ENCODE measurements at regions of chr7 and their contacts with region 1.

Region 1: DNA sequence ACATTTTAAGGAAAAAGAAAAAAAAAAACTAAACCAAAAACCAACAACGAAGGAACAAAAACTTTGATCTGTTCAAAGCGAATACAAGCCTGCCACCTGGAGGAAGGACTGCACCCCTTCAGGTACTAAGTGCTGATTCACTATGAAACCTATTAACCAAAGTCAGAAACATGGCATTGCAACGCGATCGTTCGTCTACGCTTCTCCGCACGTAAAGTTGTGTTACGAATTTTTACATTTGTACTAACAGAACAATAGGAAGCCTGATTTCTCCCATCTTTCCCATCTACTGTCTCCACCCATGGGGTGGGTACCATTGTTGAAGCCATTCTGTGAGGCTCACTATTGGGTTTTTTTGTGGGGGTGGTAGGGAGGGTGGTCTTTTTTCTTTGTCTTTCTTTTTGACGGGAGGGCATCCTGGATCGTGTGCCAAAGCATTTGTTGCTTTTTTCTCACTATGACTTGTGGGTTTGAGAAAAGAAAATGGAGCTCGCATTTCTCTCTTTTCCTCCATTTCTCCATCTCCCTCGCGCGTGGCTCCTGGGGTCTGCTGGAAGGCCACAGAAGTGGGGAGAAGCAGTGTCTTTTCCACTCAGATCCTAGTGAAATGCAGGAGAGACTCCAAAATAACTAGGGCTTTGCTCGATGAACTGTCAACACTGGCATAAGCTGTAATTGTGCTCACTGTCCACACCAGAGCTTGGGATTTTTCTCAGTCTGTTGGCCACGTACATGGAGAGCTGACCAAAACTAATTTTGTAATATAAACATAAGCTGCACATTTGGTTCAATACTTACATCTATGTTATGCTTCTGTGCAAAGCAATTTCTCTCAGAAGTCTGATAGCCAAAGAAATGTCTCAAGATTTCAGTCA is 100.9 kb upstream of the YAE1 start:
- DNase-seq: peak; percentile 63
- ATAC-seq: peak; percentile 86
- H3K4me3 ChIP-seq: no peak overlapping the region
- H3K27ac ChIP-seq: no peak overlapping the region
- H3K4me1 ChIP-seq: no peaks in the 10 kb centered on the region
- H3K27me3 ChIP-seq: peaks cover 4% of the 10 kb centered on the region
- CTCF ChIP-seq: peak; percentile 72
- POLR2A ChIP-seq: no peak
- RAD21 ChIP-seq: peak; percentile 76

Region 2: GRCh38 chr7:38398725-38399321 is 1066.5 kb before region 1 on chr7:
- CTCF ChIA-PET with region 1: no interaction called
- POLR2A ChIA-PET with region 1: no interaction called
- dilution Hi-C with region 1: no loop called
- in situ Hi-C with region 1: no loop called
- intact Hi-C with region 1: loop called (anchors 2 kb)
- DNase-seq: peak; percentile 48
- ATAC-seq: peak; percentile 94
- H3K4me3 ChIP-seq: no peak overlapping the region
- H3K27ac ChIP-seq: no peak overlapping the region
- H3K4me1 ChIP-seq: no peaks in the 10 kb centered on the region
- H3K27me3 ChIP-seq: no peaks in the 10 kb centered on the region
- CTCF ChIP-seq: peak; percentile 90
- POLR2A ChIP-seq: no peak
- RAD21 ChIP-seq: peak; percentile 73

Region 3: DNA sequence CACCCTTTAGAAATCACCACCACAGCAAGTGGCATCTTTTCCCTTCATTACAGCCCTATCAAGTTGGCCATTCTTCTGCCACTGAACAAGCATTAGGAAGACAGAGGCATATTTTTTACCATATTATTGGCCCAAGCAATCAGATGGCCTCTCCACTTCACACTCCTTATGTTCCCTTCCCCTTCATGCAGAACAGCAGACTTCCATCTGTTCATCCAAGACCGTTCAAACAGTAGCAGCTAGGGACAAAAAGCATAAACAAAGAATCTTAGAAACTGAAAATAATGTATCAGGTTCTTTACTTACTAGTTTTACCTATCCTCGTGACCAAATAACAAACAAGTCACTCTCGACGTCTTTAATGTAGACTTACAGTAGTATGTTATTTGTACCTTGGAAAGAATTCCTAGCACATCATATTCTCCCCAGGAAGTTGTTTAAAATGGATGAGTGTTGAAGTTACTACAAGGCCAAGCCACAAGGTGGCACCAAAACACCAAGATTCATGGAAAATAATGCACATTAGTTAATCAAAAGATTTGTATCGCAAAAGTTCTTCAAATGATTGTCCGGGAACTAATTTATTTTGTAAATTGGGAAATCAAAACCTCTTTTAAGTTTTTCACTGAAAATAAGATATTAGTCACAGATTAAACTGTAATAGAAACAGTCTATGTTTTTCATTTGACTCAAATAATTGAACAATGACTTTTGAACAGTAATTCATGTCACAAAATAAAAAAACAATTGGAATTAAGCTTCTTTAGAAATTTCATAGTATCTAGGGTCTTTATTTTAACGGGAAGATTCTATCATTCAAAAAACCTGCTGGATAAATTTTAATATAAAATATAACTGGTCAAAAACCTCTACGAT is 668.4 kb before region 1 on chr7:
- CTCF ChIA-PET with region 1: no interaction called
- POLR2A ChIA-PET with region 1: no interaction called
- dilution Hi-C with region 1: no loop called
- in situ Hi-C with region 1: loop called (anchors 25 kb)
- intact Hi-C with region 1: loop called (anchors 1 kb)
- DNase-seq: peak; percentile 67
- ATAC-seq: peak; percentile 85
- H3K4me3 ChIP-seq: no peak overlapping the region
- H3K27ac ChIP-seq: no peak overlapping the region
- H3K4me1 ChIP-seq: no peaks in the 10 kb centered on the region; the same call in 1 of the 2 replicates
- H3K27me3 ChIP-seq: no peaks in the 10 kb centered on the region
- CTCF ChIP-seq: peak; percentile 80
- POLR2A ChIP-seq: 0 out of 2 replicates have a peak, but pooled peaks have one; percentile 20
- RAD21 ChIP-seq: peak; percentile 88

Region 4: DNA sequence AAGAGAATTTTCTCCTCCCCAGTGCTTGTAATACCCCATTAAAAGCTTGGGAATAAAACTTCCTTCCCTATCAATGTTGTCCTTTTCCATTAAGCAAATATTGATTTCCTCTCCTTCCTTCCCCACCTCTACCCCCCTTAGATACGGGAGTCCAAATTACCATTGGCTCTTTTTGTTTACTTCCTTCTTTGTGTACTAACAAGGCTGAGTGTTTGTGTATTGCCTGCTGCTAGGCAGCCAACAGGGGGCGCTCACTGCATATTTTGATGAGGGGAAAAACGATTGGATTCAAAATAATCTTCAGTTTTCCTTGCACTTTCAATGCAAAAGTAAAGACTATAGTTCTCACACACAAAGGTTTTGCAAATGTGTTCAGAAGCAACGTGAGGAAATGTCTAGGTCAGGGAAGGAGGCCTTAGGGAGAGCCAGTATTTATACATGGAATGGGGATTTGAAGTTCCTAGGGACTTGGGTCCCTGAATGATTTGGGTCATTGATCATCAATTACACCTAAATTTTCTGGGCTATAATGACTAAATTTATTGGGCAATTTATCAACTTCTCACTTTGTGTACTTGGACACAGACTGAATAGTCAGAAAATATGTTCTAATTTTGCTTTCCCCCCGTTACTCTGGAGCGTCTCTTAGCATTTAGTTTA is 532.7 kb before region 1 on chr7:
- CTCF ChIA-PET with region 1: no interaction called
- POLR2A ChIA-PET with region 1: no interaction called
- dilution Hi-C with region 1: no loop called
- in situ Hi-C with region 1: loop called (anchors 25 kb)
- intact Hi-C with region 1: loop called (anchors 1 kb)
- DNase-seq: peak; percentile 25
- ATAC-seq: peak; percentile 53; the same call in 1 of the 2 replicates
- H3K4me3 ChIP-seq: no peak overlapping the region
- H3K27ac ChIP-seq: no peak overlapping the region
- H3K4me1 ChIP-seq: no peaks in the 10 kb centered on the region
- H3K27me3 ChIP-seq: no peaks in the 10 kb centered on the region; the same call in 1 of the 2 replicates
- CTCF ChIP-seq: peak; percentile 74
- POLR2A ChIP-seq: no peak
- RAD21 ChIP-seq: peak; percentile 55

Region 5: GRCh38 chr7:39073432-39073831 is 391.9 kb before region 1 on chr7:
- CTCF ChIA-PET with region 1: no interaction called
- POLR2A ChIA-PET with region 1: no interaction called
- dilution Hi-C with region 1: no loop called
- in situ Hi-C with region 1: no loop called
- intact Hi-C with region 1: loop called (anchors 10 kb)
- DNase-seq: no peak
- ATAC-seq: no peak
- H3K4me3 ChIP-seq: no peak overlapping the region
- H3K27ac ChIP-seq: no peak overlapping the region
- H3K4me1 ChIP-seq: no peaks in the 10 kb centered on the region
- H3K27me3 ChIP-seq: no peaks in the 10 kb centered on the region; the same call in 1 of the 2 replicates
- CTCF ChIP-seq: no peak
- POLR2A ChIP-seq: no peak
- RAD21 ChIP-seq: no peak

Region 6: DNA sequence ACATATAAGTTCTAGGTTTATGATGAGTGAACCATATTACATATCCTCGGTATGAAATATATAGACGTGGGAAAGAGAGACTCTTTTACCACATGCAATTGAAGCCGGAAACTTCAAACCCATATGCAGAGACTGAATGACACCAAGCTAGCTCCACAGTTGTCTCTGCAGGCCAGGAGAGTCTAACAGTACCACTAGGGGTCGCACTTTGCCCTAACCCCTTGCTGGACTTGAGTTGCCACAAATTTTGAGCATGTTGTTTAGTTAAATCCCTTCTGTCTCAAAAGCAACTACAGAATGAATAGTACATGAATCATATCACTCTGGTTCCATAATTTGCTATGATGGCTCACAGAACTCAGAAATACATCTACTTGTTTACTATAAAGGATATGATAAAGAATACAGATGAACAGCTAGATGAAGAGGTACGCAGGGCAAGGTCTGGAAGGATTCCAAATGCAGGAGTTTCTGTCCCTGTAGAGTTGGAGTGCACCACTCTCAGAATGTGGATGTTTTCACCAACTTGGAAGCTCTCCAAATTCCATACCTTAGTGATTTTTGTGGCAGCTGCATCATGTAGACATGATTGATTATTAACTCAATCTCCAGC is 11.4 kb before region 1 on chr7:
- CTCF ChIA-PET with region 1: interaction called, 10 read pairs
- POLR2A ChIA-PET with region 1: interaction called, 3 read pairs
- dilution Hi-C with region 1: no loop called
- in situ Hi-C with region 1: no loop called
- intact Hi-C with region 1: no loop called
- DNase-seq: peak; percentile 59
- ATAC-seq: peak; percentile 74
- H3K4me3 ChIP-seq: no peak overlapping the region
- H3K27ac ChIP-seq: no peak overlapping the region
- H3K4me1 ChIP-seq: no peaks in the 10 kb centered on the region
- H3K27me3 ChIP-seq: peaks cover 3% of the 10 kb centered on the region
- CTCF ChIP-seq: peak; percentile 61
- POLR2A ChIP-seq: no peak
- RAD21 ChIP-seq: peak; percentile 53

Measured in IMR-90 (cell line).